Left ventricle myocardium superior (tissue), 1 donor: ENCODE measurements at regions of chr14 and their contacts with region 1.

Region 1: GRCh38 chr14:74945823-74946682 is 9.3 kb downstream of the PGF start:
- DNase-seq: peak; percentile 82
- ATAC-seq: peak; percentile 84

Region 2: GRCh38 chr14:74905375-74906142 is 40.5 kb before region 1 on chr14:
- intact Hi-C with region 1: no loop called
- DNase-seq: peak; percentile 86
- ATAC-seq: peak; percentile 50

Region 3: DNA sequence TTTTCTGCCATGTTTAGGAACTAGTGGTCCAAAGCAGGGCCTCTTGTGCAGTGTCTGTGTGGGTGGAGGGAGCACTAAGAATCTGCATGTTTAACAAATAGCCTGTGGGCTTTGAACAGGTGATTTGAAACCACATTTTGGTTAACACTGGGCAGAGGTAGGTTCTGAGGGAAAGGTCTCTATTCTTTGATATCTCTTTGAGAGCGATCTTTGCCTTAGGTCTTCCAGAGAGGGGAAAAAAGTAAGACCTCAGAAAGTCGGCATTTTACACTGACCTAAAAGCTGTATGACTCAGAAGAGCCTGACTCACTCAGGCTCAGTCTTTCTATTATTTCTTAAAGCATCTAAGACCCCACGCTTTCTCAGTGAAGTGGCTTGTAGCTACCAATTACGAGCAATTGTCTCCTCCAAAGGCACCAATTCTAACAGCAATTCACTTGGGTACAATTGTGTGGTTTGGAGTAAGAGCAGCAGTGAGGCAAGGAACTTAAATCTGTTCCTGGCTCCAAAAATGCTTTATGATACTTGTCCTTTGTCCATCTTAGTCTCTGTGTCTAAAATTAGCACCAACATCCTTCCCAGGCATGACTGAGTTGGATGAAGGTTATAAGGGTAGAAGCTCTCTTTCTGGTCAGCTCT is 65.4 kb after region 1 on chr14:
- intact Hi-C with region 1: loop called (anchors 10 kb)
- DNase-seq: no peak
- ATAC-seq: peak; percentile 66

Region 4: GRCh38 chr14:75069811-75070782 is 124.0 kb after region 1 on chr14:
- intact Hi-C with region 1: loop called (anchors 10 kb)
- DNase-seq: no peak
- ATAC-seq: peak; percentile 21

Region 5: DNA sequence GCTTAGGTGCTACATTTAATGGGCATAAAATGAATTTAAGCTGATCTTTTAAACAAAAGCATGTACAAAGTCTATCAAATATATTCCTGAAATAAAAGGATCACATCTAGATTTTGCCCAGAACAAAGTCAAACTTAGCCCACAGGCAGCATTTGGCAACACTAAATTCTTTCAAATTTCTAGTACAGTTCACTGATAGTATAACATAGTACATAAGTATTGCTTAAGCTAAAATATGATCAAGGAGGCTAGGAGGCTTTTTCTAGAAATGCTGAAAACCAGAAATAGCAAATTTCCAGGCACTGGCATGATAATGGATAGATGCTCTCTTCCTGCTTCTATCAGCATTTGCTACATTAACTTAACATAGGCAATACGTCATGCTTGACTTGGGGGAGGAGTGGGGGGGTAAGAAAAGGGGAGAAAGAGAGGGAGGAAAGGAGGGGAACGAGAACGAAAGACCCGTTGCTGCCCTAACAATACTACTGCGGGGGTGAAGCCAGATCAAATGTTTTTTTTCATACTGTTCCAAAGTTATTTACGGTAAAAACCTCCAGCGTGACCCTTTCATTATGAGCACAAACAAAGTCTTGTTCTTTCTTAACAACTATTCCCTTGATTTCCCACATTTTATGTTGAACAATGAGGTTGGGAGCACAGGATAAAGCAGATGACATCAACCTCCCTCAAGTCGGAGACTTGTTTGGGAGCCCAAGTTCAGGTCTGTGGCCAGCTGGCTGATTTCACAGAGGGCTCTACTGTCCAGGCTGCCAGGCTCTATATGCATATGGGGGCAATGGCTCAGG is 219.7 kb after region 1 on chr14:
- intact Hi-C with region 1: no loop called
- DNase-seq: no peak
- ATAC-seq: peak; percentile 57